HEK293 (cell line): ENCODE measurements at regions of chr1 and their contacts with region 1.

Region 1: GRCh38 chr1:226121587-226122400 is 59.3 kb downstream of the H3-3A start:
- H3K4me3 ChIP-seq: peak overlapping the region; percentile 48
- H3K27ac ChIP-seq: peak overlapping the region; percentile 97
- H3K4me1 ChIP-seq: peaks cover 5% of the 10 kb centered on the region
- CTCF ChIP-seq: peak; percentile 98

Region 2: DNA sequence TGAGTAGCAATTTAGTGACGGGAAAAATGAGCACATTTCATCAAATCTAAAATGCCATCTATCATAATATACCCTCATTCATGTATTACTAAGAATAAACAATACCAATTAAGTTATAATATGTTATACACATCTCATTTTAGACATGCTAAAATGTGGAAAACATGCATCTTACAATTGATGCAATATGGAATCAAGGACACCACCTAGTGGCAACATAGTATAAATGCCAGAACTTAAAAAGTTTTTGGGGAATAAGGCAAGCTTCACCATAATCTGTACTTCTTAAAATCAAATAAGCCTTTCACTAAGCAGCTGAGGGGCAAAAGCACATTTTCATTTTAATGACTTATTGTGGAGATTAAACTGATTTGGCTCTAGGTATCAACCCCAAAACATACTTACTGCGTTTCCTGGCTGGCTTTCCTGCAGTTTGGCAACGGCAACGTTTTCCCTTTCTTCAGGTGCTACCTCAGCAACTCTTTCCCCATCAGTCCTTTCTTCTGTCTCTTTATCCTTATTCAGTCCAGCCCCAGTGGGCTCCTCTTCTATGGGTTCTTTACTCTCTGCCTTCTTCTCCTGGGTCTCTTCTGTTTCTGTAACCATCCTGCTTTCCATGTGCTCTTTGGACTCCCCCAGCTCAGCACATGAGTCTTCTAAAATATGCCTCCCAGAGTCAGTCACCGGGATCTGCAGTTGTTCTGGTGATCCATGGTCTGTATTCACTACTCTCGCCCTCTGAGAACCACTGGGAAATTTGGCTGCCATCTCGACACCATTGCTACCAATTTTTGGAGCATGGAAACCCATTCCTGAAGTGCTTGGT is 134.1 kb before region 1 on chr1:
- CTCF ChIA-PET with region 1: interaction called, 10 read pairs
- POLR2A ChIA-PET with region 1: no interaction called
- H3K4me3 ChIP-seq: no peak overlapping the region
- H3K27ac ChIP-seq: no peak overlapping the region
- H3K4me1 ChIP-seq: no peaks in the 10 kb centered on the region
- CTCF ChIP-seq: peak; percentile 53; the same call in 1 of the 2 replicates

Region 3: GRCh38 chr1:226109829-226110248 is 12.0 kb before region 1 on chr1:
- CTCF ChIA-PET with region 1: interaction called, 39 read pairs
- POLR2A ChIA-PET with region 1: interaction called, 10 read pairs
- H3K4me3 ChIP-seq: peak overlapping the region; percentile 58
- H3K27ac ChIP-seq: peak overlapping the region; percentile 89
- H3K4me1 ChIP-seq: peaks cover 13% of the 10 kb centered on the region
- CTCF ChIP-seq: no peak

Region 4: GRCh38 chr1:226186124-226187018 is 64.6 kb after region 1 on chr1 and contains the start of gene ACBD3:
- CTCF ChIA-PET with region 1: interaction called, 78 read pairs
- POLR2A ChIA-PET with region 1: interaction called, 4 read pairs
- H3K4me3 ChIP-seq: peak within 1 kb of the TSS; percentile 74
- H3K27ac ChIP-seq: peak within 1 kb of the TSS; percentile 93
- H3K4me1 ChIP-seq: peaks cover 13% of the 10 kb centered on the region
- CTCF ChIP-seq: peak; percentile 82

Region 5: GRCh38 chr1:226223786-226224244 is 102.0 kb after region 1 on chr1:
- CTCF ChIA-PET with region 1: interaction called, 19 read pairs
- POLR2A ChIA-PET with region 1: no interaction called
- H3K4me3 ChIP-seq: peak overlapping the region; percentile 40
- H3K27ac ChIP-seq: no peak overlapping the region; the same call in 1 of the 2 replicates
- H3K4me1 ChIP-seq: no peaks in the 10 kb centered on the region; the same call in 1 of the 2 replicates
- CTCF ChIP-seq: peak; percentile 57

Region 6: GRCh38 chr1:226365831-226366231 is 244.0 kb after region 1 on chr1:
- CTCF ChIA-PET with region 1: interaction called, 14 read pairs
- POLR2A ChIA-PET with region 1: no interaction called
- H3K4me3 ChIP-seq: no peak overlapping the region
- H3K27ac ChIP-seq: no peak overlapping the region
- H3K4me1 ChIP-seq: no peaks in the 10 kb centered on the region
- CTCF ChIP-seq: no peak